ENCODE measurements at regions of chr3 and their contacts with region 1.

Region 1: DNA sequence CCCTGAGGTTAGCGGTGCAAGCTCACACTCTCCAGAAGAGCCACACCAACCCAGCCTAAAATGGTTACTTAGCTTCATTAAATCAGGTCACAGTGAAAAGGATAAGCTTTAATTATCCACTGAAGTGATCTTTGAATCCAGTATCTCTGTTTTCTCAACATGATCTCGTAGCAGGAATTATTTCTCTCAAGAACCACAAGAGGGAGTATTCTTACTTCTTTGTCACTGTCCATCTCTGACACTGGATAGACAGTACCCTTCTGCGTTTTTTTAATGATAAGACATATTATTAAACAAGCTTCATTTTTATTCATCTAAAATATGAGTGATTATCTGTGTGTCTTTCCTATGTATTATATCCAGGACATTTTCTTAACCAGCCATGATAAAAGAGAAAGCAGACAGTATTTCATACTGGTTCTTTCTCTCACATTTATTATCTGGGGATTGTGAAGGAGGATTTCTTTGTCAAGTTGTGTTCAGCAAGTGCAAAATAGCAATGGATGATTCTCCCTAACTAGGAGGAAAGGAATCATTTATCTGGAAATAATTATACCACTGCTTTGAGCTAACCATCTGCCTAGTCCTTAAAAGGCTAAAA is 105.4 kb upstream of the CCDC54 start:
- DNase-seq: peak; percentile 35
- H3K4me3 ChIP-seq: no peak overlapping the region
- H3K27ac ChIP-seq: no peak overlapping the region
- H3K4me1 ChIP-seq: no peaks in the 10 kb centered on the region
- H3K27me3 ChIP-seq: no peaks in the 10 kb centered on the region
- CTCF ChIP-seq: peak; percentile 64 to 69

Region 2: GRCh38 chr3:107206141-107206540 is 65.7 kb before region 1 on chr3:
- CTCF ChIA-PET with region 1: no interaction called
- dilution Hi-C with region 1: no loop called
- in situ Hi-C with region 1: no loop called
- intact Hi-C with region 1: loop called (anchors 1 kb)
- DNase-seq: peak; percentile 58
- H3K4me3 ChIP-seq: no peak overlapping the region
- H3K27ac ChIP-seq: no peak overlapping the region
- H3K4me1 ChIP-seq: peaks cover 24% of the 10 kb centered on the region
- H3K27me3 ChIP-seq: no peaks in the 10 kb centered on the region
- CTCF ChIP-seq: peak; percentile 70 to 76

Region 3: GRCh38 chr3:107416145-107416544 is 144.3 kb after region 1 on chr3:
- CTCF ChIA-PET with region 1: interaction called, 14 read pairs
- dilution Hi-C with region 1: no loop called
- in situ Hi-C with region 1: loop called (anchors 5 kb)
- intact Hi-C with region 1: loop called (anchors 1 kb)
- DNase-seq: peak; percentile 41
- H3K4me3 ChIP-seq: no peak overlapping the region
- H3K27ac ChIP-seq: no peak overlapping the region
- H3K4me1 ChIP-seq: peaks cover 7% of the 10 kb centered on the region
- H3K27me3 ChIP-seq: no peaks in the 10 kb centered on the region
- CTCF ChIP-seq: no peak

Region 4: DNA sequence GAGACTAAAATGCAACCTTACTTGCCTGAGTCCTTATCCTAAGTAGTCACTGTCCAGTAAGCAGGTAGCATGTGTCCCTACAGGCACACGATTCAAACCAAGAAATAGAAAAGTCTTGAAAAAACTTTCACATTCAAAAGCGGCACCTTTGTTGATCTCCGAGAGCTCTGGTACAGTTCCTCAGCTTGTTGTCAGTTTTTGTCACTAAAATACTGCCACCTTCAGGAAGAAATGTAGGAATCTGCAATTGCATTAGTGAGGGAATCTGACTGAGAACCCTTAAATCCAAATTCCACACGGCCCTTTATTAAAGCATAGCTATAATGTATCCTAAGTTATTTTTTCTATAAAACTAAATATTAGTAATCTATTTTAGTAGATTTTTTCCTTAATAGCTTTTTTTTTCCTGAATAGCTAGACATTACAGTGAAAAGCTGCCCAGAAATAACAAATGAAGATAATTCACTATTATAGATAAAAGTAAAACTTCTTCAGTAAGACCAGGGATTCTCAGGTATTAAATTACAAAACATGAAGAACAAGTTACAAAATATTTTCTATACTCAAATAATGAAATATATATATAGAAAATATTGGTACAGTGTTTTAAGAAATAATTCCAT is 149.4 kb after region 1 on chr3:
- CTCF ChIA-PET with region 1: interaction called, 14 read pairs
- dilution Hi-C with region 1: no loop called
- in situ Hi-C with region 1: loop called (anchors 5 kb)
- intact Hi-C with region 1: loop called (anchors 1 kb)
- DNase-seq: peak; percentile 66
- H3K4me3 ChIP-seq: peak overlapping the region in 2 of 3 experiments; percentile 22 to 31
- H3K27ac ChIP-seq: no peak overlapping the region
- H3K4me1 ChIP-seq: peaks cover 5% of the 10 kb centered on the region
- H3K27me3 ChIP-seq: no peaks in the 10 kb centered on the region
- CTCF ChIP-seq: peak; percentile 56 to 70